PC-3 (cell line): ENCODE measurements at regions of chr4 and their contacts with region 1.

Region 1: GRCh38 chr4:109658871-109659410 is 44.3 kb downstream of the CASP6 start:
- DNase-seq: no peak
- ATAC-seq: no peak; the same call in 1 of the 2 replicates
- H3K4me3 ChIP-seq: no peak overlapping the region
- H3K27ac ChIP-seq: no peak overlapping the region
- H3K4me1 ChIP-seq: no peaks in the 10 kb centered on the region
- H3K27me3 ChIP-seq: no peaks in the 10 kb centered on the region
- CTCF ChIP-seq: 0 out of 2 replicates have a peak, but pooled peaks have one; percentile 20

Region 2: GRCh38 chr4:109424093-109424841 is 234.7 kb before region 1 on chr4:
- CTCF ChIA-PET with region 1: interaction called, 3 read pairs
- POLR2A ChIA-PET with region 1: no interaction called
- intact Hi-C with region 1: loop called (anchors 2 kb)
- DNase-seq: no peak
- ATAC-seq: no peak
- H3K4me3 ChIP-seq: no peak overlapping the region
- H3K27ac ChIP-seq: no peak overlapping the region
- H3K4me1 ChIP-seq: no peaks in the 10 kb centered on the region
- H3K27me3 ChIP-seq: no peaks in the 10 kb centered on the region
- CTCF ChIP-seq: no peak

Region 3: GRCh38 chr4:109548655-109549054 is 110.3 kb before region 1 on chr4:
- CTCF ChIA-PET with region 1: no interaction called
- POLR2A ChIA-PET with region 1: no interaction called
- intact Hi-C with region 1: loop called (anchors 5 kb)
- DNase-seq: peak; percentile 76
- ATAC-seq: peak; percentile 92
- H3K4me3 ChIP-seq: no peak overlapping the region
- H3K27ac ChIP-seq: peak overlapping the region; percentile 49; the same call in 1 of the 2 replicates
- H3K4me1 ChIP-seq: peaks cover 8% of the 10 kb centered on the region
- H3K27me3 ChIP-seq: no peaks in the 10 kb centered on the region
- CTCF ChIP-seq: no peak

Region 4: GRCh38 chr4:109559983-109560686 is 98.8 kb before region 1 on chr4 and contains the start of gene MCUB:
- CTCF ChIA-PET with region 1: interaction called, 3 read pairs
- POLR2A ChIA-PET with region 1: no interaction called
- intact Hi-C with region 1: loop called (anchors 5 kb)
- DNase-seq: peak; percentile 89
- ATAC-seq: peak; percentile 91
- H3K4me3 ChIP-seq: peak within 1 kb of the TSS; percentile 96
- H3K27ac ChIP-seq: peak within 1 kb of the TSS; percentile 73
- H3K4me1 ChIP-seq: peaks cover 15% of the 10 kb centered on the region
- H3K27me3 ChIP-seq: no peaks in the 10 kb centered on the region
- CTCF ChIP-seq: no peak
- total RNA-seq, gene MCUB: 18.4 and 21.7 TPM in 2 replicates

Region 5: GRCh38 chr4:109749388-109750082 is 90.6 kb after region 1 on chr4:
- CTCF ChIA-PET with region 1: no interaction called
- POLR2A ChIA-PET with region 1: no interaction called
- intact Hi-C with region 1: no loop called
- DNase-seq: no peak
- ATAC-seq: no peak
- H3K4me3 ChIP-seq: no peak overlapping the region
- H3K27ac ChIP-seq: no peak overlapping the region
- H3K4me1 ChIP-seq: no peaks in the 10 kb centered on the region
- H3K27me3 ChIP-seq: no peaks in the 10 kb centered on the region
- CTCF ChIP-seq: no peak

Region 6: DNA sequence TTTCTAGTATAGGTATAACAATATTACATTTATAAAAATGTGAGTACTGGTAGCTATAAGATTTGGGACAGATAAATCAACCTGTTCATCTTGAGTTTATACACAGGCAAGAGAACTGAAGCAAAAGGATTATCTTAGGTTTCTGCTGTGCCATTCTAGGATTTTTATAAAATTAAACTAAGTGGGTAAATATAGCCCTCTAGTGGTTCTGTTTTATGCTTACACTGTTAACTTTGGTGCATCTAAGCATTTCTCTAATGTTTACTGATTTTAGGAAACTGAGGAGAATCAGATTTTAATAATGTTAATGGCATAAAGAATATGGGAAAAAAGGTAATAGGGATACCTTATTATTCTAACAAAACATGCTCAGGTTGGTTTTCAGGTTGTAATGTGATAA is 167.8 kb after region 1 on chr4:
- CTCF ChIA-PET with region 1: no interaction called
- POLR2A ChIA-PET with region 1: no interaction called
- intact Hi-C with region 1: no loop called
- DNase-seq: peak; percentile 32
- ATAC-seq: peak; percentile 33; the same call in 1 of the 2 replicates
- H3K4me3 ChIP-seq: no peak overlapping the region
- H3K27ac ChIP-seq: no peak overlapping the region
- H3K4me1 ChIP-seq: no peaks in the 10 kb centered on the region
- H3K27me3 ChIP-seq: no peaks in the 10 kb centered on the region
- CTCF ChIP-seq: peak; percentile 68